A549 (cell line): ENCODE measurements at regions of chr11 and their contacts with region 1.

Region 1: GRCh38 chr11:43944761-43945311 is 2.4 kb downstream of the C11orf96 start:
- DNase-seq: peak; percentile 60 to 79
- ATAC-seq: peak; percentile 55 to 86
- H3K4me3 ChIP-seq: peak overlapping the region; percentile 51; the same call in 2 of the 3 replicates
- H3K27ac ChIP-seq: no peak overlapping the region
- H3K4me1 ChIP-seq: peaks cover 18% of the 10 kb centered on the region; the same call in 2 of the 3 replicates
- CTCF ChIP-seq: peak; percentile 91
- EP300 ChIP-seq: no peak
- POLR2A ChIP-seq: no peak
- RAD21 ChIP-seq: peak; percentile 71 to 75

Region 2: DNA sequence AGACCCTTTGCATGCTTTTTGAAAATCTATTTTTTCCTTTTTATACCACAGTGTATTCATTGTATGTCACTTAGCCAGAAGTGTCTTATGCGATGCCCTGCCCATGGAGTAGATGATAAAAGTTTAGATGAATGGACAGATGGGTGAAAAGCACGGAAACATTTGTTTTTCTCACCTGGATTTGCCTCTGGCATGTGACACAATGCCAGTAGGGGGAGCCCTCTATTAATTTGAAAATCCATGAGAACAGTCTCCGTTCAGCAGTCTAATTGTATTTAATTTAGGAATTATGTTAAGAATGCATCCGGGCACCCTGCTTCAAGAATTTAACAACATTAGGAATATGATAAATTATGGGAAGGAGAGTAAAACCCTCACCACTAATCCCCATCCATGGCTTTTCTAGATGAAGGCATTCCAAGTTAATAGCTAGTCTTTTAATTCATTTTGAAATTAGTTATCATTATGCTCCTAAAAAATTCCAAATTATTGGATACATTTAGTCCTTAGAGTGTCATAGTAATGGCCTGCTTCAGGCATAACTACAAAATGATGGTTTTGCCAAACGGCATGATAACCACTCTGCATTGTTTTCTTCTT is 119.5 kb before region 1 on chr11:
- CTCF ChIA-PET with region 1: interaction called, 11 read pairs
- POLR2A ChIA-PET with region 1: no interaction called
- DNase-seq: peak; percentile 10 to 31
- ATAC-seq: peak; percentile 30 to 70; a peak in 5 of 6 replicates
- H3K4me3 ChIP-seq: no peak overlapping the region
- H3K27ac ChIP-seq: no peak overlapping the region
- H3K4me1 ChIP-seq: peaks cover 7% of the 10 kb centered on the region; the same call in 2 of the 3 replicates
- CTCF ChIP-seq: peak; percentile 84
- EP300 ChIP-seq: no peak
- POLR2A ChIP-seq: no peak
- RAD21 ChIP-seq: peak; percentile 61 to 68

Region 3: GRCh38 chr11:43895601-43896000 is 49.2 kb before region 1 on chr11:
- CTCF ChIA-PET with region 1: interaction called, 172 read pairs
- POLR2A ChIA-PET with region 1: no interaction called
- DNase-seq: no peak
- ATAC-seq: no peak
- H3K4me3 ChIP-seq: no peak overlapping the region
- H3K27ac ChIP-seq: no peak overlapping the region
- H3K4me1 ChIP-seq: no peaks in the 10 kb centered on the region
- CTCF ChIP-seq: no peak
- EP300 ChIP-seq: no peak
- POLR2A ChIP-seq: no peak
- RAD21 ChIP-seq: no peak

Region 4: DNA sequence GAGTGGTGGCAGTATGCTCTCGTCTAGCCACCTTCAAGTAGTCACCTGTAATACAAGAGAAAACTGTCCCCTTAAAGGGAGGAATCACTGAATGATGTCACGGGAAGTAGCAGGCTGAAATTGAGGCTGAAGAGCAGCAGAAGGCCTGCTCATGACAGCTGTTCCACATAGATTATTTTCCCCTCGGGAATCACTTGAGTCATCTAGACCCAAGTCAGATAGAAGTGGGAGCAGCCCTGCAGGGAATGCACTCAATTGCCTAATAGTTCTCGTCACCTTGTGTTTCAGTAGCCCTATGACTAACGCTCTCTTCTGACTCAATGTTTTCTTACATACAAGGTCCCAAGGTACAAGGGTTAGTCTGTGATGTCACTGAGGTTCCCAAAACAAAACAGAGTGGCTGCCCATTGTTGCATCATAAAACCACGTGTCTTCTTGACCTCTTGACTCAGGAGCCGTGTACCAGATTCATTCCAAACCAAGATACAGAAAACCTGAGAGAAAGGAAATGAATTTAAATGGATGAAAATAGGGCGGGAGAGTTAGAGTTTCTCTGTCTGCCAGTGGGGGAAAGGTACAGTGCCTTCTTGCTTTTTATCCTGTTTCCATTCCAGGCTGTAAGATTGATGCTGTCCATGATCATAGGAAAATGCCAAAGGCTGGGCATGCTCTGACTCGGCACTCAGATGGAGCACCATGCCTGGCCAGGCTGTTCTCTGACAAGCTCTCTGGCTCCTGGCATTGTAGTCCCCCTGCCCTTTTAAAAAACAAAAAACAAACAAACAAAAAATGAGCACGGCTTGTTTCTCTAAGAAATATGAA is 24.0 kb before region 1 on chr11:
- CTCF ChIA-PET with region 1: interaction called, 129 read pairs
- POLR2A ChIA-PET with region 1: interaction called, 3 read pairs
- DNase-seq: peak; percentile 95 to 97
- ATAC-seq: peak; percentile 96 to 97
- H3K4me3 ChIP-seq: no peak overlapping the region
- H3K27ac ChIP-seq: peak overlapping the region; percentile 67 to 79
- H3K4me1 ChIP-seq: peaks cover 25% of the 10 kb centered on the region
- CTCF ChIP-seq: no peak
- EP300 ChIP-seq: peak; percentile 61 to 69; a peak in 2 of 5 replicates
- POLR2A ChIP-seq: no peak
- RAD21 ChIP-seq: peak in 1 of 2 experiments; percentile 30; a peak in 2 of 5 replicates

Region 5: GRCh38 chr11:43962383-43963278 is 17.8 kb after region 1 on chr11:
- CTCF ChIA-PET with region 1: interaction called, 45 read pairs
- POLR2A ChIA-PET with region 1: no interaction called
- DNase-seq: no peak
- ATAC-seq: no peak; a peak in 1 of 6 replicates
- H3K4me3 ChIP-seq: no peak overlapping the region
- H3K27ac ChIP-seq: no peak overlapping the region
- H3K4me1 ChIP-seq: no peaks in the 10 kb centered on the region
- CTCF ChIP-seq: no peak
- EP300 ChIP-seq: no peak
- POLR2A ChIP-seq: no peak
- RAD21 ChIP-seq: no peak

Region 6: DNA sequence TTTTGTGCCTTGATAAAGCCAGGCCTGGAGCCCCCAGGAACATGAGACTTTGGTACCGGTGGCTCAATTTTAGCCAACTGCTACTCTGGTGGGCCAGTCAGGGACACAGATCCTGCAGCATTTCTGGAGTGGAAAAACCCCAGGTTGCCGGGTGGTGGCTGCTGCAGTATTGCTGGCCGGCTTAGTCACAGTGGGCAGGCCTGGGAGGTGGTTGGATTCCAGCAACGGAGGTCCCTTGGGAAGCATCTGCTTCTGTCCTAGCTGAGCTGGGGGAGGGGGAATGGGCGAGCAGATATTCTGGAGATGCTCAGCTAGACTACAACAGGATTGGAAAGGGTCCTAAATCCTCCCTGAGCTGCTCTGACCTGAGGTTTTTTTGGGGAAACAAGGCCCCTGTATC is 71.3 kb after region 1 on chr11:
- CTCF ChIA-PET with region 1: no interaction called
- POLR2A ChIA-PET with region 1: no interaction called
- DNase-seq: peak in 1 of 2 experiments; percentile 32
- ATAC-seq: peak; percentile 68 to 76
- H3K4me3 ChIP-seq: no peak overlapping the region
- H3K27ac ChIP-seq: peak overlapping the region; percentile 35 to 52; a peak in 4 of 6 replicates
- H3K4me1 ChIP-seq: peaks cover 26% of the 10 kb centered on the region
- CTCF ChIP-seq: no peak
- EP300 ChIP-seq: no peak
- POLR2A ChIP-seq: no peak
- RAD21 ChIP-seq: no peak

Region 7: DNA sequence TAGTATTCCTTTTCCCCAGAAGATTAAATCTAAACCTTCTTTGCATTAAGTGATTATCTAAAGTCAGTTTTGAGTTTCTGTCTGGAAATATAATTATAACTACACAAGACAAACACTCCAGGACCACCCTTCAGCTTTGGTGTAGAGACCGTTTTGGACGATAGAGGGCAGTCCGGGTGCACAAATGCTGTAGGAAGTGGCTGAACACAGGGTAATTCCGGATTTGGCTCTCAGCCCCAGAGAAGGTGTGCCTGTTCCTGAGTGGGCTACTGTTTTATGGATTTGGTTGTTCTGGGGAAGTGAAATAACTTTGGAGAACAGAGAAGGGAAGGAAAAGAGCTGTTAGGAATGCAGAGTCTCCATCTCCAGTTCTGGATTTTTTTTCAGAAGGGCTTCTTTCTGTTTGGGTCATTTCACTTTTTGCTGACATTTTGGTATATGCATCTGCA is 165.4 kb after region 1 on chr11:
- CTCF ChIA-PET with region 1: no interaction called
- POLR2A ChIA-PET with region 1: no interaction called
- DNase-seq: peak; percentile 49 to 72
- ATAC-seq: peak; percentile 93 to 96
- H3K4me3 ChIP-seq: no peak overlapping the region
- H3K27ac ChIP-seq: no peak overlapping the region
- H3K4me1 ChIP-seq: no peaks in the 10 kb centered on the region
- CTCF ChIP-seq: peak; percentile 81
- EP300 ChIP-seq: no peak
- POLR2A ChIP-seq: no peak
- RAD21 ChIP-seq: peak; percentile 76 to 79

Region 8: GRCh38 chr11:44125598-44125997 is 180.8 kb after region 1 on chr11:
- CTCF ChIA-PET with region 1: no interaction called
- POLR2A ChIA-PET with region 1: no interaction called
- DNase-seq: no peak
- ATAC-seq: no peak
- H3K4me3 ChIP-seq: no peak overlapping the region
- H3K27ac ChIP-seq: no peak overlapping the region
- H3K4me1 ChIP-seq: no peaks in the 10 kb centered on the region
- CTCF ChIP-seq: no peak
- EP300 ChIP-seq: no peak
- POLR2A ChIP-seq: no peak
- RAD21 ChIP-seq: no peak